Calu3 (cell line): ENCODE measurements at regions of chr4 and their contacts with region 1.

Region 1: DNA sequence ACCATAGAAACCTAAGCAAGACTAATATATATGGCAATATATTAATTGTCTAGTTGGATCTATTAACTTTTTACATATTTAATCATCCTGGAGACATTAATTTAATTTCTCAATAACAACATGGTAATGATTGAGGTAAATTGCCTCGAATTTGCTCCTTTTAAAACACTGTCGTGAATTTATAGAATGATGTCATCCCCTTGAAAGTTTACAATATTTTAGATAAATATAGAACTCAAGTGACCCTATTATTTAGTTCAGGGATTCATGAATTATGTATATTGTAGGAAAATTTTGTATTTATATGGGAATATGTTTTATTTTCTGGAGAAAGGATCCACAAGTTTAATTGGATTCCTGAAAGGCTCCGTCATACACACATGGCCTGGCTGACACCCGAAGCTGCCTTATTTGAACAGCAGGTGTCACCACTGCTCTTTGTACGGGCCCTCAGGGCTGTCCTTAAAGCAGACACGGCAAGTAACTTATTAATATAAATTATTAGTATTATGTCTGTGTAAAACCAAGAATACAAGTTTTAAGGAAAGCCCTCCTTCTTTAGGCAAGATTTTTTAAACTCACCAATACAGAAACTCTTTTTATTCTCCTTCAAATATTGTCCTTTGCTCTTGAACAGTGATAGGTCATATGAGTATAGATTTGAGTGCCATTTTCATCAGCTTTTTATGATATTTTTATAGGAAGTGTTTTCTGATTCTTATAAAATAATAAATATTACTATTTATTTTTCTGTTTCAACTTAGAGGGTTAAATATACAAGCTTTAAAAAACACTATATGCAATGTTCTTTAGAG is 1.9 kb upstream of the PLRG1 start:
- DNase-seq: peak; percentile 73
- H3K4me3 Mint-ChIP-seq: no peak overlapping the region
- H3K27ac Mint-ChIP-seq: no peak overlapping the region
- H3K4me1 Mint-ChIP-seq: peaks cover 14% of the 10 kb centered on the region
- H3K27me3 Mint-ChIP-seq: no peaks in the 10 kb centered on the region
- CTCF ChIP-seq: peak; percentile 63

Region 2: GRCh38 chr4:154399259-154399974 is 152.7 kb before region 1 on chr4:
- CTCF ChIA-PET with region 1: no interaction called
- intact Hi-C with region 1: loop called (anchors 5 kb)
- DNase-seq: no peak
- H3K4me3 Mint-ChIP-seq: no peak overlapping the region
- H3K27ac Mint-ChIP-seq: no peak overlapping the region
- H3K4me1 Mint-ChIP-seq: no peaks in the 10 kb centered on the region
- H3K27me3 Mint-ChIP-seq: peaks cover 29% of the 10 kb centered on the region
- CTCF ChIP-seq: no peak

Region 3: DNA sequence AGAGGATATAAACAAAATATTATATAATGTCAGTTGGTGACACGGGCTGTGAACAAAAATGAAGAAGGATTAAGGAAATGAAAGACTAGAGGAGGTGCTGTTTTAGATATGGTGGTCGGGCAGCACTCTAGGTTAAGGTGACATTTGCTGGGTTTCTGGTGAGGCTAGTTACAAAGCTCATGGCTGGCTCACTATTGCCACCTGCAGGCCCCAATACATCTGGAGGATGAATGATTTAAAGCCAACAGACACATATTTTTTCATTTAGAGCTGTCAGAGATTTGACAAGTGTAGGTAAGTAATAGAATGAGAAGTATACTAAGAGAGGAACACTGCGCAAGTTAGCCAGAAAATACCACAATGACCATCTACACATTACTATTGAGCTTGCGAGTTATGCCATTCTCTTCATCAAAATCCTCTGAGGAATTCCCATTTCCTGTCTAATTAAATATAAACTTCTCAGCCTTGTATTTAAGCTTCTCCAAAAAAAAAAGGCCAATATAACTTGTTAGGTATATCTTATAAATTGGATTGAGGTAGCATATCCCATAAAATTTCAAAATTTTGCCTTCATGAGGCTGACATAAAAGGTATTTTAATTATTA is 66.7 kb after region 1 on chr4:
- CTCF ChIA-PET with region 1: interaction called, 13 read pairs
- intact Hi-C with region 1: loop called (anchors 1 kb)
- DNase-seq: peak; percentile 67
- H3K4me3 Mint-ChIP-seq: no peak overlapping the region
- H3K27ac Mint-ChIP-seq: no peak overlapping the region
- H3K4me1 Mint-ChIP-seq: no peaks in the 10 kb centered on the region
- H3K27me3 Mint-ChIP-seq: no peaks in the 10 kb centered on the region
- CTCF ChIP-seq: peak; percentile 56

Region 4: DNA sequence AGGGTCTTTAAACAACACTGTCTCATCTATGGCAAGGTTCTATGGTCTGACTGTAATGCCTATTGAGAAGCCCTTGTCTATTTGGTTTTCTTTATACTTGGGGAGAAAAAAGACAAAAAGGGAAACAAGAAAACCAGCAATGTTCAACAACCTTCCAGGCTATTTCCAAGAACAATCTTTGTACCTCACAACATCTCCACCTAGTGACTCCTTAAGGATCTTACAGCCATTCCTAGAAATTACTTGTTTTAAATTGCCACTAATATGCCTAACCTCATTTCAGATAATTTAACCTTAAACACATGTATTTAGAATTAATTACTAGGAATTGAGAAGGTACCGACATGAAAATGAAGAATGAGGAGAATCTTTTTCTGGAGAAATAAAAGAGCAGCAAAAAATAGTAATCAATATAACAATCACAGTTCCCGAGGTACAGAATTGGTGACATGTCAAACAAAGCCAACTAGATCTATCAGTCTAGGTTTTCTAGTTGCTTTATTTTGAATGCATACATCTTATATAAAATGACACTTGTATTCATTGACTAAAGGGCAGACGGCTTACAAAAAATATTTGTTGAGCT is 227.4 kb after region 1 on chr4:
- CTCF ChIA-PET with region 1: no interaction called
- intact Hi-C with region 1: loop called (anchors 2 kb)
- DNase-seq: no peak
- H3K4me3 Mint-ChIP-seq: no peak overlapping the region
- H3K27ac Mint-ChIP-seq: no peak overlapping the region
- H3K4me1 Mint-ChIP-seq: no peaks in the 10 kb centered on the region
- H3K27me3 Mint-ChIP-seq: no peaks in the 10 kb centered on the region
- CTCF ChIP-seq: peak; percentile 25

Region 5: GRCh38 chr4:154939851-154940250 is 387.8 kb after region 1 on chr4:
- CTCF ChIA-PET with region 1: no interaction called
- intact Hi-C with region 1: loop called (anchors 10 kb)
- DNase-seq: no peak
- H3K4me3 Mint-ChIP-seq: no peak overlapping the region
- H3K27ac Mint-ChIP-seq: no peak overlapping the region
- H3K4me1 Mint-ChIP-seq: no peaks in the 10 kb centered on the region
- H3K27me3 Mint-ChIP-seq: no peaks in the 10 kb centered on the region
- CTCF ChIP-seq: no peak